MCF 10A (cell line): ENCODE measurements at regions of chr3 and their contacts with region 1.

Region 1: DNA sequence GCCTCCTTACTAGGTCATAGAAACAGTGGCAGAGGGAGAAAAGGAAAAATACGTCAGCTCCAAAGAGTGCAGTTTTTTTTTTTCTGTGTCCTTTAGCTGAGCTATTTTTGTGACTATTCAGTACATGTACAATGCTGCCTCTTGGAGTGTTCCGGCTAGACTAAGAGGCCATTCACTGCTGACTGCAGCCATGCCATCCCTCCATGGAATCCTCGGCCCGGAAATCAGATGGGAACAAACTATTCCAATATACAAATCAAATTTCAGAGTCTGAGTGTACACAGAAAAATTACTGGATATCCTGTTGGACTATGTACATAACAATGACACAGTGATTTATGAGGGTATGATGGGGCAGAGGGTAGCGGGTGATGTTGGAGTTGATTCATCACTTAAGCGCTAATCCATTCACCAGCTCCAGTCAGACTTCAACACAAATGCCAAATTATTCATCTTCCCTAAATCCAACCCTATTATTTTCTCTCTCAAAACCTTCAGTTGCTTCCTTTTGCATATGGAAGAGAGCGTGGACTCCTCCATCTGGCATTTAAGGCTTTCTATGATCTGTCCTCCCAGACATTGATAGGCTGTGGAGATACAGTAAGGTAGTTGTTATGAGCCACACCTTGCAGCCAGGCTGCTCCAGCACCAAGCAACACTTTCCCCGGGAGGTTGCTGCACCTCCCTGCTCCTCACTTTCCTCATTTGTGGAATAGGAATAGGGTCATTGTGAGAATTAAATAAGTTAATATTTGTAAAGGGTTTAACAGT is 109.1 kb downstream of the LPP start:
- DNase-seq: peak; percentile 62
- H3K4me3 Mint-ChIP-seq: no peak overlapping the region
- H3K27ac Mint-ChIP-seq: peak overlapping the region; percentile 43
- H3K4me1 Mint-ChIP-seq: peaks cover 8% of the 10 kb centered on the region
- H3K27me3 Mint-ChIP-seq: no peaks in the 10 kb centered on the region
- CTCF ChIP-seq: no peak

Region 2: GRCh38 chr3:188241072-188241471 is 22.0 kb before region 1 on chr3:
- CTCF ChIA-PET with region 1: no interaction called
- POLR2A ChIA-PET with region 1: interaction called, 10 read pairs
- intact Hi-C with region 1: no loop called
- DNase-seq: no peak
- H3K4me3 Mint-ChIP-seq: no peak overlapping the region
- H3K27ac Mint-ChIP-seq: no peak overlapping the region
- H3K4me1 Mint-ChIP-seq: peaks cover 28% of the 10 kb centered on the region
- H3K27me3 Mint-ChIP-seq: no peaks in the 10 kb centered on the region
- CTCF ChIP-seq: no peak

Region 3: GRCh38 chr3:188331166-188331565 is 68.1 kb after region 1 on chr3:
- CTCF ChIA-PET with region 1: no interaction called
- POLR2A ChIA-PET with region 1: no interaction called
- intact Hi-C with region 1: no loop called
- DNase-seq: no peak
- H3K4me3 Mint-ChIP-seq: no peak overlapping the region
- H3K27ac Mint-ChIP-seq: no peak overlapping the region
- H3K4me1 Mint-ChIP-seq: peaks cover 9% of the 10 kb centered on the region
- H3K27me3 Mint-ChIP-seq: no peaks in the 10 kb centered on the region
- CTCF ChIP-seq: no peak